Mammary epithelial cell (primary cell): ENCODE measurements at regions of chr3 and their contacts with region 1.

Region 1: GRCh38 chr3:124741027-124741426 is 10.8 kb downstream of the UMPS start:
- DNase-seq: peak; percentile 83
- H3K4me3 ChIP-seq: no peak overlapping the region
- H3K27ac ChIP-seq: no peak overlapping the region
- H3K4me1 ChIP-seq: peaks cover 27% of the 10 kb centered on the region
- H3K27me3 ChIP-seq: no peaks in the 10 kb centered on the region
- CTCF ChIP-seq: no peak

Region 2: DNA sequence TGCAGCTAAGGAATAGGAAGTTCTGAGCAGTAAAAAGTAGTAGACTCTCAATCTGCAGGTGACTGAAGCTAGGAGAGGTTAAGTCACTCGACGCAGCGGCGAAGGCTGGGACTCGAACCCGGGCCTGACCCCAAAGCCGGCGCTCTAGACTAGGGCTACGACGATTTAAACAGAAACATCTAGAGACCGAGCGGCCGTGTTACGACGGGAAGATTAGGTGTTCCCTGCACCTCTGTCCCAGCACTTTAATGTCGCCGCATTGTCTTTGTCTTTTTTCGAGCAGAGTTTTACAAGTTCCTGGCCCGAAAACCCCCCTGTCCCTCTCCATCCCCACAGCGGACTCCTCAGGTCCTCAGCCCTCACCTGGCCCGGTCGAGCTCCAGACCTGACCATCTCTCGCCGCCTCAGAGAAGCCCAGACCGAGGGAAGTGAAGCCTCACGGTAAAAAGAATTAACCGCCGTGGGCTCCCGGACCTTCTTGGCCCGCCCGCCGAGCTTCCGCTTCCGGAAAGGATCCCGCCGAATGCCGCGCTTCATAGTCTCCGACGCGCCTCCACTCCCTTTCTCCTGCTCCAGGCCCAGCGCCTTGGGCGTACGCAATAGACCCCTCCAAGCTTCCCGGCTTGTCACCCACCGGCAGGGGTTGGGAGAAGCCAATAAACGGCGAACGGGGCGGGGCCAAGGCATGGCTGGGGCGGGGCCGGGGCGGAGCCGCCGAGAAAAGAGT is 780.1 kb before region 1 on chr3 and contains the start of gene CCDC14:
- CTCF ChIA-PET with region 1: no interaction called
- dilution Hi-C with region 1: no loop called
- in situ Hi-C with region 1: no loop called
- intact Hi-C with region 1: no loop called
- DNase-seq: peak; percentile 93
- H3K4me3 ChIP-seq: peak within 1 kb of the TSS; percentile 83 to 91 (median 84)
- H3K27ac ChIP-seq: peak within 1 kb of the TSS; percentile 85
- H3K4me1 ChIP-seq: peaks cover 6% of the 10 kb centered on the region
- H3K27me3 ChIP-seq: no peaks in the 10 kb centered on the region
- CTCF ChIP-seq: no peak
- total RNA-seq, gene CCDC14: 34.1 to 39.7 TPM

Region 3: GRCh38 chr3:124540550-124541211 is 200.3 kb before region 1 on chr3:
- CTCF ChIA-PET with region 1: no interaction called
- dilution Hi-C with region 1: no loop called
- in situ Hi-C with region 1: no loop called
- intact Hi-C with region 1: no loop called
- DNase-seq: no peak
- H3K4me3 ChIP-seq: no peak overlapping the region
- H3K27ac ChIP-seq: no peak overlapping the region
- H3K4me1 ChIP-seq: no peaks in the 10 kb centered on the region
- H3K27me3 ChIP-seq: no peaks in the 10 kb centered on the region
- CTCF ChIP-seq: no peak

Region 4: DNA sequence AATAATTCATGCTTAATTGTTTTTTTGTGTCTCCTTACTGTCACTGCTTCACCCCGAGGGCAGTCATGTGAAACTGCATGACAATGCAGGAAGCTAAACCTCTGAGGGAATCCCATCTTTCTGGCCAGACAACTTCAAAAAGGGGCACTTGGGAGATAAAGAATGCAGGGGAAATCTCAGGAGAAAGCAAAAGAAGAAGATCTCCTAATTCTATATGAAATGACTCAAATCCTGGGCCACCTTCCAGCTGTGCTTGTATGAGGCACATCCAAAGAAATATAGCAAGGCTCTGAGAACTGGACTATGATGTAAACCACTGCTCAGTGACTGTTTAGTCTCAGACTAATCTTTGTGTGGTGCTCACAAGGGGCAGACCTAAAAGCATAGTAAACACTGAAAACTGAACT is 33.4 kb before region 1 on chr3:
- CTCF ChIA-PET with region 1: no interaction called
- dilution Hi-C with region 1: no loop called
- in situ Hi-C with region 1: no loop called
- intact Hi-C with region 1: loop called (anchors 1 kb)
- DNase-seq: peak; percentile 41
- H3K4me3 ChIP-seq: no peak overlapping the region
- H3K27ac ChIP-seq: no peak overlapping the region
- H3K4me1 ChIP-seq: no peaks in the 10 kb centered on the region
- H3K27me3 ChIP-seq: peaks cover 4% of the 10 kb centered on the region
- CTCF ChIP-seq: no peak